ENCODE measurements at regions of chr3 and their contacts with region 1.

Region 1: GRCh38 chr3:124351430-124352148 is 359.7 kb upstream of the ROPN1 start:
- DNase-seq: no peak
- H3K4me3 ChIP-seq: no peak overlapping the region
- H3K27ac ChIP-seq: no peak overlapping the region
- H3K4me1 ChIP-seq: no peaks in the 10 kb centered on the region
- H3K27me3 ChIP-seq: no peaks in the 10 kb centered on the region
- CTCF ChIP-seq: peak in 5 of 6 experiments; percentile 35 to 65 (median 44)
- POLR2A ChIP-seq: no peak

Region 2: DNA sequence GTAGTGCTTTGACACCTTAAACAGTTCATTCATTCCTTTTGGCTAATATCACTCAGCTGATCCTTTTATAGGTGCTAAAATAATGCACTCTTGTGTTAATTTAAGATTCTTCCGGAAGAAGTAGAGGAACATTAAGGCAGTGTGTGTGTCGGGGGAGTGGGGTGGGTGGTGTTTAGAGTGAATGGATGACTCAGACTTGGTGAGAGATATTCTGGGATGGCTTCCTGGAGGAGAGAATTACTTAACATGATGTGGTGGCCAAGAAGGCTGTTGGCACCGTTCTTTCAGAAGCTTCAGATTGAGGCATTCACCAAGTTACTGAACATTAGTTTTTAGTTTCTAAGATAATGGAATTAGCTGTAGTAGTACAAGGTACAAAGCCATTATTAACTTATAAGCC is 234.1 kb before region 1 on chr3:
- intact Hi-C with region 1: no loop called
- DNase-seq: no peak
- H3K4me3 ChIP-seq: no peak overlapping the region
- H3K27ac ChIP-seq: no peak overlapping the region
- H3K4me1 ChIP-seq: peaks cover 0 to 23% (median 7%) of the 10 kb centered on the region in 3 donors
- H3K27me3 ChIP-seq: no peaks in the 10 kb centered on the region
- CTCF ChIP-seq: no peak
- POLR2A ChIP-seq: no peak

Region 3: DNA sequence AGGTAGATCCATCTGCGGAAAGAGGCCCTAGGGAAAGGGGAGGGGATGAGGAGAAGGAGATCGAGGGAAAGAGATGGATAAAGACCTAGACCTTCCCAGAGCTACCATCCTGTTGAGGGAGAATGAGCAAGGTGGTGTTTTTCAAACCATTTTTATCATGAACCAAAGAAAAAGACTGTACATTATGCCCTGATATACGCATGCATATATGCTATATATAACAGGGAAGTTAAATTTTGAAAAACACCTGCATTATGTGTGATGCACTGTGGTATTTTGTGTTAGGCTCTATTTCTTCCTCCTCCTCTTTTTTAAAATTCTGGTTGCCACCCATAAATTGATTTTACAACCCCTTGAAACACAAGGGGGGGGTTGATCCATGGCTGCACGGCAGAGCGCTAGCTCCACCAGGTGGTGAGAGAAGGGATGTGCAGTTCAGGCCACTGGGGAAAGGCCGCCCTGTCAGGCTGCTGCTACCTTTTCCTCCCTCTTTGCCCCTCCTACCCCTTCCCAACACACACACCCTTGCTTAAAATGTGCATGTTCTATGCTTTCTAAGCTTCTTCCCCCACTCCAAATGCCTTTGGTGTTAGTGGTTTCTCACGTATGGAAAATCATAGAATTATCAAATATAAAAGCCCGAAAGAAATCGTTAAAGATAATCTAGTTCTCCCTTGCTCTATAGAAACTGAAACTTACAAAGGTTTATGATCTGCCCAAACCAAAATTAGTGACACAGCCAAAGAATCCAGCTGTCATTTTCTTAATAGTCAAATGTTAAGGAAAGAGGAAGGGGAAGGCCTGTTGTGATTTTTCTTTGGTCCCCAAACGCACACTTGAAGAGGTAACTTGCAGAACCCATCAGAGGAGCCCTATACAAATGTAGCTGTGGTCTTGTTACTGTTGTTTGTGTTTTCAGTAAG is 116.7 kb after region 1 on chr3:
- intact Hi-C with region 1: loop called (anchors 5 kb)
- DNase-seq: no peak
- H3K4me3 ChIP-seq: no peak overlapping the region
- H3K27ac ChIP-seq: no peak overlapping the region
- H3K4me1 ChIP-seq: no peaks in the 10 kb centered on the region
- H3K27me3 ChIP-seq: peaks cover 0 to 4% (median 0%) of the 10 kb centered on the region in 4 donors
- CTCF ChIP-seq: peak; percentile 61 to 90 (median 78)
- POLR2A ChIP-seq: no peak

Region 4: DNA sequence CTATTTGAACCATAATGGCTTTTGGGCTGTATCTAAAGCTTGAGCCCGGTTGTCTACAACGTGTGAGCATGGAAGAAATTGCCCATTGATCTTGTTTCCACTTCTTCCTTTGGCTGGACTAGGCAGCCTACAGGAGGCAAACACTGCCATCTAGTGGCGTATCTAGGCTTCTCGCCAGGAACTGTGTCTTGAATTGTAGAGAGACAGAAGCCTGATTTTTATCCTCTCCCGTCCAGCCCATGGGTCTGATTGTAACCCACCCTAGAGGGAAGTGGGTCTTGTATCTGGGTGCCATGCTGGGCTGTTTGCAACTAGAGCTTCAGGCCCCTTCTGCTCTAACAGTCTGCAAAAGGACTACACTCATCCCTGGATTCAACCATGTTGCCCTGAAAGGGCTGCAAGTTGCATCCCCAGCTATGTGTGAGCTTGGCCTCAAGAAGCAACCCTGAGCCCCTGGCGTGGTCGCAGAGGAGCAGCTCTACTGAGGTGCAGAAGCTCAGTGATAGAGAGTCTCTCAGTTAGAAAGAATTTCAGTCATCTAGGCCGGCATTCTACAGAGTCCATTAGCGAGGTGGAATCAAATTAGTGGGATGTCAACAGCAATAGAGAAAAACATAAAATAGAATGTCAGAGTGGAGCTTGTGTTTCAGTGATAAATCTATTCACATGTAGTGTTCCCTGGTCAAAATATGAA is 208.4 kb after region 1 on chr3:
- intact Hi-C with region 1: loop called (anchors 10 kb)
- DNase-seq: no peak
- H3K4me3 ChIP-seq: no peak overlapping the region
- H3K27ac ChIP-seq: peak overlapping the region in 3 of 4 donors; percentile 63 to 74 (median 69)
- H3K4me1 ChIP-seq: peaks cover 17 to 50% (median 26%) of the 10 kb centered on the region in 3 donors
- H3K27me3 ChIP-seq: peaks cover 0 to 68% (median 0%) of the 10 kb centered on the region in 4 donors
- CTCF ChIP-seq: peak; percentile 55 to 83 (median 78)
- POLR2A ChIP-seq: no peak

Measured in esophagus squamous epithelium (tissue), 5 donors.